ENCODE measurements at regions of chr14 and their contacts with region 1.

Region 1: GRCh38 chr14:77520565-77520964 is 21.9 kb upstream of the ISM2 start:
- DNase-seq: no peak
- H3K4me3 ChIP-seq: no peak overlapping the region
- CTCF ChIP-seq: no peak

Region 2: GRCh38 chr14:77485901-77486678 is 34.5 kb before region 1 on chr14:
- in situ Hi-C with region 1: loop called (anchors 5 kb)
- DNase-seq: no peak
- H3K4me3 ChIP-seq: no peak overlapping the region
- CTCF ChIP-seq: no peak

Region 3: GRCh38 chr14:77554207-77554606 is 33.6 kb after region 1 on chr14:
- in situ Hi-C with region 1: no loop called
- DNase-seq: no peak
- H3K4me3 ChIP-seq: no peak overlapping the region
- CTCF ChIP-seq: no peak

Measured in astrocyte of the cerebellum (primary cell).